ENCODE measurements at regions of chr2 and their contacts with region 1.

Region 1: DNA sequence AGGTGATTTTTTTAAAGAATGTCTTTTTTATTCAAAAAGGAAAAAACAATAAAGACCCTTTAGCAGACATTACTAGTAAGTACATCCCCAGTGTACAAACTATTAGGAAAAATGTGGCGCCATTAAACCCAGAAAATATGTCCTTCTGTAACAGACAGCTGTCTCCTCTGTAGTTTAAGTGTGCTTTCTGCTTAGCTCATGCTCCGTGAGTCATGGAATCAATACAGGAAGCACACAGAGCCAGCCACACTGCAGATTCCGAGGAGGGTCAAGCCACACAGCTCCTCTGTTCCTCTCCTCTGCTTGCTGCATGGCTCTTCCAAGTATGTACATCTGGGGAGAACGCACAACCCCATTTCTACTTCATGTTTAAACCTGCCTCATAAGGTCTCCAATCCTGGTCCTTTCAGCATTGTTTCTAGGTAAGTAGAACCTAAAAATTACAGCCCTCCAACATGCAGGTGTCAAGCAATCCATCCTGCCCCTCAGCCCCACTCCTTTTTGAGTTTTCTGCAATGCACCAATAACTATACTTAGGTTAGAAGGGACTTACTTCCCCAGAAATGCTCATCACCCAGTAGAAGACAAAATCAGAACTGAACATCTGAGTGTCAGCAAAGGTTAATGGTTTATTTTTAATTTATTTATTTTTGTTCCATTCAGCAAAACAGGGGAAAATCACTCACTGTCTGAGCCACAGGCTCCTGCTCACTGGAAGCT is 37.5 kb downstream of the ACVR1 start:
- DNase-seq: no peak

Region 2: GRCh38 chr2:157789933-157790511 is 48.6 kb before region 1 on chr2:
- intact Hi-C with region 1: loop called (anchors 5 kb)
- DNase-seq: peak; percentile 76

Region 3: GRCh38 chr2:157876066-157876787 is 37.6 kb after region 1 on chr2 and contains the start of gene ACVR1:
- intact Hi-C with region 1: loop called (anchors 2 kb)
- DNase-seq: peak; percentile 98
- total RNA-seq, gene ACVR1: 22.7 TPM